ENCODE measurements at regions of chr17 and their contacts with region 1.

Region 1: GRCh38 chr17:38868817-38869525 is 887 bp upstream of the LASP1 start:
- DNase-seq: peak; percentile 83 to 85
- H3K4me3 ChIP-seq: peak overlapping the region; percentile 97
- H3K27ac ChIP-seq: peak overlapping the region; percentile 35
- H3K4me1 ChIP-seq: peaks cover 39% of the 10 kb centered on the region
- H3K27me3 ChIP-seq: no peaks in the 10 kb centered on the region
- CTCF ChIP-seq: no peak

Region 2: DNA sequence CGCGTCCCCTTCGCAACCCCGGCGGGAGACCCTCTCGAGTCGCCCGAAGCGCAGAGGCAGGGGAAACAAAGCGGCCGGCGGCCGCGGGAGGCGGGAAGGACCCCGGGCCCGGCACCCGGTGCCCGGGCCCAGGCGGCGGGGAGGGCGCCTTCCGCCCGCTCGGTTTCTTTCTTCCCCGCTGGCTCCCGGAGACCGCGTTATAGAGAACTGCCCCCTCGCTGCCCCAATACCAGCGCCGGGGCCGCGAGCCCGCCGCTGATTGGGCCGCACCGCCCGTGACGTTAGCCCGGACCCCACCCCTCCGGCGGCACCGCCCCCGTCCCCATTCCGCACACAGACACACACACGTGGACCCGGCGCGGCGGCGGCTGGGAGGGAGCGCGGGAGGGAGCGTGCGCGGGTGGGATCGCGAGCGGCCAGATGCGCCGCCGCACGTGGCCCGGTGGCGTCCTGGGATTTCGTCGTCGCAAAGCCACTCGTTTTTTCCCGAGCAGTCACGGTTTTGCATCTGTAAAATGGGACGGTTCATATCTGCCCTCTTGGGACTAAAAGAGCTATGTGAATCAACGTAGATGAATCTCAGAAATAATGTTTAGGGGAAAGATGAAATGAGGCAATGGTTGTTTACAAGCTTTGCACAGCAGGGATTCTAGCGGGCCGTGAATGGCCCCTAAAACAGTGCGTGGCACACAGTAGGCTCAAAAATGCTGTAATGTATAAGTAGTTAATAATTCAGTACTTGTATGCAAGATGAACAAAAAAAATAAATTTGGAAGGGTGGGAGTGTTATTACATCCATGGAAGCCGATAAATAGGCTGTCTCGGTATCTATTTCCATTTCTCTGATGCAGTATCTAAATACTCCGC is 194.0 kb before region 1 on chr17 and contains the start of gene EPOP:
- CTCF ChIA-PET with region 1: no interaction called
- POLR2A ChIA-PET with region 1: no interaction called
- intact Hi-C with region 1: loop called (anchors 5 kb)
- DNase-seq: peak; percentile 62 to 89
- H3K4me3 ChIP-seq: peak within 1 kb of the TSS; percentile 95
- H3K27ac ChIP-seq: no peak within 1 kb of the TSS
- H3K4me1 ChIP-seq: peaks cover 23% of the 10 kb centered on the region
- H3K27me3 ChIP-seq: no peaks in the 10 kb centered on the region
- CTCF ChIP-seq: no peak; the same call in 1 of the 2 replicates
- total RNA-seq, gene EPOP: 8.4 and 10.6 TPM in 2 replicates

Region 3: GRCh38 chr17:38799378-38800236 is 69.4 kb before region 1 on chr17 and contains the start of gene PIP4K2B:
- CTCF ChIA-PET with region 1: no interaction called
- POLR2A ChIA-PET with region 1: interaction called, 37 read pairs
- intact Hi-C with region 1: loop called (anchors 10 kb)
- DNase-seq: peak; percentile 89 to 95
- H3K4me3 ChIP-seq: peak within 1 kb of the TSS; percentile 92
- H3K27ac ChIP-seq: peak within 1 kb of the TSS; percentile 96
- H3K4me1 ChIP-seq: peaks cover 23% of the 10 kb centered on the region
- H3K27me3 ChIP-seq: no peaks in the 10 kb centered on the region
- CTCF ChIP-seq: no peak
- total RNA-seq, gene PIP4K2B: 40.6 and 47.4 TPM in 2 replicates

Region 4: DNA sequence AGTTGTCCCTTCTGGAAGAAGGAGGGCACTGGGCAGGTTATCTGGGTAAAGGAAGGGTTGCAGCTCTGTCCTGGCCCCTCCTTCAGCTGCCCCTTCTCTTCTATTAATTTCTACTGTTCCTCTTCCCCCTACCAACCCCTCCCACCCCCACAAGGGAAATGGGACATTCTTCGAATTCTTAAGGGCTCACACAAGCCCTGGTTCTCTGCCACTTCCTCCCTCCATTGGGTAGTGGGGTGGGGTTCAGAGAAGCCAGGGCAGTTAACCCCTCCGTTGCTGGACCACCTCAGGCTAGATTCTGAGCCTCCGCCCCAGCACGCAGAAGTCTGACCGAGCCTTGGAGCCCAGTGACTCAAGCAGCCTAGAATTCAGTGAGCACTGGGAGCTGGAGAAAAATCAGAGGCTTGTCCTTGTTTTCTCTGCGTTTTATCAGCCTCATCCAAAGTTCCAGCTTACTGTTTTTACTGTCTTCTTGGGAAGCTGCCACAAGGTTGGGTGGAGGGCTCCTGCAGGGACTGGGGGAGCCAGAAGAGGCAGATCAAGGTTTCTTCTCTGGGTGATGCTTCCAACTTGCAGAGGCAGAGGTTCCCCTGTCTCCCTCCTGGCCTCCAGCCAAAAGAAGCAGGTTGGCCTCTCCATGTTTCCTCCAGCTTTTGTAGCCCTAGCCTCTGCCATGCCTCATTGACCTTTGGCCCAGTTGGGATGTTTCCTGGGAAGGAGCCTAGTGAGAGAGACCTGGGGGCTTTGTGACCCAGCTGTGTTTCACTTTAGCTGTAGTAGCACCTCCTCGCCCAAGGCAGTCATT is 11.1 kb after region 1 on chr17:
- CTCF ChIA-PET with region 1: no interaction called
- POLR2A ChIA-PET with region 1: no interaction called
- intact Hi-C with region 1: no loop called
- DNase-seq: peak; percentile 89 to 93
- H3K4me3 ChIP-seq: peak overlapping the region; percentile 38; the same call in 1 of the 2 replicates
- H3K27ac ChIP-seq: peak overlapping the region; percentile 77
- H3K4me1 ChIP-seq: peaks cover 84% of the 10 kb centered on the region
- H3K27me3 ChIP-seq: no peaks in the 10 kb centered on the region
- CTCF ChIP-seq: no peak

Region 5: DNA sequence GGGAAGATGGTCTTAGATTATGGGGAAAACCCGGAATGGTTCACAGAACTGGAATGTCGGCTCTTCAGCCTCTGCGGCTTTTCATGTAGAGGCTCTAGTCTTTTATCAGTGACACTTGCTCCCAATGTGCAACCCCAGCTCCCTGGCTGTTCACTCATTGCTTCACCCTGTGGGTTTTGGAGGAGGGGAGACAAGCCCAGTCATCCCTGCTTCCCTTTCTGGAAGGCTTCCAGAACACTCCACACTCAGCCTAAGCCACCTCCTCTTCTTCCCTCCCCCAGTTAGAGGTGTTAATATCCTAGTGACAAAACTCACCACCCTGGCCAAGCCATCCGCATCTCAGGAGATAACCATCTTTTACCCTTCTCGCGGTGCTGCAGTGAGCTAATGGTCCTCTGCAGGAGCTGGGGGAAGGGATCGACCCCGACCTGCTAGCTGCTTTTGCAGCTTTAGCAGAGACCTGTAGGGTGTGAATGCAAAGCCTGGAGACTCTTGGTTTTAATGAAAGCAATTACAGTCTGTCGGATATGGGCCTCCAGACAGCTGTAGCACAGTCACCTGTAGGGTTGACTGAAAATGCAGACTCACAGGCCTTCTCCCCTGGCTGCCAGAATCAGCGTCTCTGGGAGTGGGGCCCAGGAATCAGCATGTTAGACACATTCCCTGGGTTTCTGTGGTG is 32.1 kb after region 1 on chr17:
- CTCF ChIA-PET with region 1: no interaction called
- POLR2A ChIA-PET with region 1: interaction called, 4 read pairs
- intact Hi-C with region 1: loop called (anchors 1 kb)
- DNase-seq: peak; percentile 87 to 96
- H3K4me3 ChIP-seq: peak overlapping the region; percentile 25; the same call in 1 of the 2 replicates
- H3K27ac ChIP-seq: peak overlapping the region; percentile 90
- H3K4me1 ChIP-seq: peaks cover 68% of the 10 kb centered on the region
- H3K27me3 ChIP-seq: no peaks in the 10 kb centered on the region
- CTCF ChIP-seq: no peak

Region 6: DNA sequence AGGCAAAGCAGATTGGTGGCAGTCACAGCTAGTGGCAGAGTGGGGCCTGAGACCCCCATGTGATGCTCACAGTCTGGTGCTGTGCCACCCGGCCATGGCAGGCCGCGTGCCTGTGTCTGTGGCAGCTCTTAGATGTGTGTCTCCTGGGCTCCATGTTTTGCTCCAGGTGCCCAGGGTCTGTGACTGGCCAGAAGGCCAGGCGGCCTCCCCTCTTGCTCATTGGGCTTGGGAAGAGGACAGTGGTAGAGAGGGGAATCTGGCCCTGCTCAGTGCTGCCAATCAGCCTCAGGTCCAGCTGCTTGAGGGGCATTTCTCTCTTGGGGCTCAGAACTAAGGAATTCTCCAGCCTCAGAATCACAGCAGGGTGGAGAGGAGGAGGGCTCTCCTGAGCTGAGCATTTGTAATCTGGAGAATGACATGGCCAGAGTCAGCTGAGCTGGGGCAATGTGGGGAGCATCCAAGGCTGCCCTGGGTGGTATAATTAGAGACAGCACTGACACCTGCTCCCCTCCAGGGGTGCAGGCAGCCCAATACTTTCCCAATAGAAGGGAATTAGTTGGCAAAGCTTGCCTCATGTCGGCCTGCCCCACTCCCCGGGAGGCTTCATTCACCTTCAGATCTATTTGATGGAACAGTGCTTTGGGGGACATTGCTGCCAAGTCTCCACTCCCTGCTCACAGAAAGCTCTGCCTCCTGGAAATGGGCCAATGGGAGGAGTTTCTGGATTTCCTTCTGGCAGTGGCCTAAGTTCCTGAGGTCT is 53.7 kb after region 1 on chr17:
- CTCF ChIA-PET with region 1: no interaction called
- POLR2A ChIA-PET with region 1: no interaction called
- intact Hi-C with region 1: no loop called
- DNase-seq: peak in 1 of 2 experiments; percentile 38
- H3K4me3 ChIP-seq: no peak overlapping the region
- H3K27ac ChIP-seq: peak overlapping the region; percentile 18; the same call in 1 of the 2 replicates
- H3K4me1 ChIP-seq: no peaks in the 10 kb centered on the region
- H3K27me3 ChIP-seq: no peaks in the 10 kb centered on the region
- CTCF ChIP-seq: no peak

Region 7: DNA sequence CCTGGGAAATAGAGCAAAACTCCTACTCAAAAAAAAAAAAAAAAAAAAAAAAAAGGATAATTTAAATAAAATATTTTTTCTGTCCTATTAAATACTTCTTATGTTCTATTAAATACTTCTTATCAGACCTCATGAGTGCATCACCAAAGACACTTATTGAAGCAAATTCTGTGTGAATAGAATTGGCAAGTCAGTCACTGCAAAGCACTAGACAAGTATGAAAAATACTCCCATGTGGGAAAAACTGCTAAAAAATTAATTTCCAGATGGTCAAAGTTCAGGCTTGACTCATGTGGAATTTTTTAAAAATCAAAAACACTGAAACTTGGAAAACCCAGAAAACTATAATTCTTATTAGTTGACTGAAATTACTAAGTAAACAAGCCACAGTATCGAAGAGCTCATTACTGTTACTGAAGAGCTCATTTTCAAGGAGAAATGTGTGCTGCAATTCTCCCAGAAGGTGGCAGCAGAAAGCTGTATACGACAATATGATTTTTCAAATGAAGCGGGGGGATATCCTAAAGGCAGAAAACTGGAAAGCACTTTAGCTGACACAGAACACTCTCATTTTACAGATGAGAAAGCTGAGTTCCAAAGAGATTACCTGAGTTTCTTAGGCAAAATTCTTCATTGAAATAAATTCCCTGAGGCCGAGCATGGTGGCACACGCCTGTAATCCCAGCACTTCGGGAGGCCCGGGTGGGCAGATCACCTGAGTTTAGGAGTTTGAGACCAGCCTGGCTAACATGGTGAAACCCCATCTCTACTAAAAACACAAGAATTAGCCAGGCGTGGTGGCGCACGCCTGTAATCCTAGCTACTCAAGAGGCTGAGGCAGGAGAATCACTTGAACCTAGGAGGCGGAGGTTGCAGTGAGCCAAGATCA is 114.1 kb after region 1 on chr17:
- CTCF ChIA-PET with region 1: no interaction called
- POLR2A ChIA-PET with region 1: no interaction called
- intact Hi-C with region 1: loop called (anchors 2 kb)
- DNase-seq: peak; percentile 34 to 51
- H3K4me3 ChIP-seq: no peak overlapping the region
- H3K27ac ChIP-seq: no peak overlapping the region
- H3K4me1 ChIP-seq: no peaks in the 10 kb centered on the region
- H3K27me3 ChIP-seq: no peaks in the 10 kb centered on the region
- CTCF ChIP-seq: peak; percentile 86

Region 8: GRCh38 chr17:39153599-39154051 is 284.7 kb after region 1 on chr17:
- CTCF ChIA-PET with region 1: interaction called, 4 read pairs
- POLR2A ChIA-PET with region 1: no interaction called
- intact Hi-C with region 1: loop called (anchors 1 kb)
- DNase-seq: peak; percentile 79 to 85
- H3K4me3 ChIP-seq: peak overlapping the region; percentile 73
- H3K27ac ChIP-seq: no peak overlapping the region
- H3K4me1 ChIP-seq: peaks cover 8% of the 10 kb centered on the region
- H3K27me3 ChIP-seq: no peaks in the 10 kb centered on the region
- CTCF ChIP-seq: no peak

Measured in PC-9 (cell line).